ENCODE measurements at regions of chr14 and their contacts with region 1.

Region 1: DNA sequence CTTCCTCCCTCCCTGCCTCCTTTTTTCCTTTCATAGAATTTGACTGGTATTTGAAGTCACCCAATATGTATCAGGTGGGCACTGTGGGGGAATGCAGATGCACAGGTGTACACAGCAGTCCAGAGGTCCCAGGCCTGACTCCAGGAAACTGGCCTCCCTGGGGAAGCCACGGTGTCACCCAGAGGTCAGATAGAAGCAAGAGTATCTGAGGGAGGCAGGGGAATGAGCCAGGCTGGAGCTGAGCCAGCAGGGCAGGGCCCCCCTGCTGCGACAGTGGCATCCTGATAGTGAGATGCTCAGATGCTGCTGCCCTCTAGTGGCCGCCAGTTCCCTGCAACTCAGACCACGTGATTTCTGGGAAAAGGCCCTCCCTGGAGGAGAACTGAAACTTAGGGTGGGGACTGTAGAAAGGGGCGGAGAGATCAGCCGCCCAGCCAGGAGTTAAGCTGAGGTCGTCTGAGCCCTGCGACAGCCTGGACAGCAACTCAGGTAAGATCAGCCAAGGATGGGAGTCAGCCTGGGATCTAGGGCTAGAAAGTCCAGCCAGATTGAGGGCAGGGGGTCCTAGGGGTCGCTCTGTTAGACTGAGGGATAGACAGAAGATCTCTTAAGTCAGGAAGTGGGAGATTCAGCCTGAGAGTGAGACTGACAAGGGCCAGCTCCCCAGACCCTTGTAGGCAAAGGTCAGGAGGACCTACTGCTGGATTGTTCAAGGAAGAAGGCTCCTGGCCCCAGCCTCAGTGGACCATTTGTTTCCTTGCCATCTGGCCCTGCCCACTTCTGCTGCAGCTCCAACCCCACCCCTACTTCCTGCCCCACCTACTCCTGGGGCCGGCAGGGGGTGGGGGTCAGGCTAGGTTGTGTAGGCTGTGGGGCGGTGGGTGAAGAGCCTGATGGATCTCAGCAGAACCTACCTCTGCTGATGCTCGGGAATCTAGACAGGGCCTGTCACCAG is at the start of gene IRF9:
- DNase-seq: peak; percentile 95 to 97 (median 96)
- ATAC-seq: peak; percentile 88 to 95 (median 94)
- H3K4me3 ChIP-seq: peak within 1 kb of the TSS; percentile 36 to 85 (median 72)
- H3K27ac ChIP-seq: peak within 1 kb of the TSS; percentile 82 to 100 (median 97)
- H3K4me1 ChIP-seq: peaks cover 0 to 54% (median 22%) of the 10 kb centered on the region in 12 donors
- H3K27me3 ChIP-seq: no peaks in the 10 kb centered on the region
- CTCF ChIP-seq: peak; percentile 86 to 98 (median 93)
- POLR2A ChIP-seq: peak in 1 of 2 donors; percentile 59
- total RNA-seq, gene IRF9: 23.4 to 169 (median 29.8) TPM

Region 2: DNA sequence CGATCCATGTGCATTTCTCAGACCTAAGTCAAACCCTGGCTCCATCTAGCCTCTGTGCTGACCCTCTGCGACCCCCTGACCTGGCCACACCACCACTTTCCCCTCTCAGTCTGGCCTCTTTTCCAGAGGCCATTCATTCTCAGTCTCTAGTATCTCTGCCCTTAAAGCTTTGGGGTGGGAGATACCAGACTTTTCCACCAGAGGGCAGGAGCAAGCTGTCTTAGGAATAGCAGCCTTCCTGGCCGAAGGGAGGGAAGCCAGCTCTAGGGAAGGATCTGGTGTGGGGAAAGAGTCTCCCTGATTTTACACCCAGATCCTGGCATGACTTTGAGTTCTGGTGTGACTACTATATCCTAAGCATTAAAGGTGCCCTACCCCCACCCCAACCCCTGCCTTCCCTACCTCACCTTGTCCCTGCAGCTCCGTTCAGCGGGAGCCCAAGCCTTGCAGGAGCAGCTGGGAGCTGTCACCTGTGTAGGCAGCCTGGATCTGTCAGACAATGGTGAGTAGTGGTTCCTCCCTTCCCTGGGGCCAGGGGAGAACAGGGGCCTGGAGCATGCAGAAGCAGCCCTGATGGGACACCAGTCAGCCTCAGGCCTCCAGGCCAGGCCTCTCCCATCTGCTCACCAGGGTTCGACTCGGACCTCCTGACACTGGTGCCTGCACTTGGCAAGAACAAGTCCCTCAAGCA is 102.7 kb before region 1 on chr14:
- intact Hi-C with region 1: loop called in 3 of 10 experiments (anchors 2 to 10 kb)
- DNase-seq: peak in 3 of 5 donors; percentile 31 to 81 (median 65)
- ATAC-seq: peak; percentile 71 to 91 (median 78)
- H3K4me3 ChIP-seq: no peak overlapping the region
- H3K27ac ChIP-seq: no peak overlapping the region
- H3K4me1 ChIP-seq: peaks cover 0 to 2% (median 0%) of the 10 kb centered on the region in 12 donors
- H3K27me3 ChIP-seq: peaks cover 0 to 6% (median 0%) of the 10 kb centered on the region in 9 donors
- CTCF ChIP-seq: peak; percentile 29 to 94 (median 75)
- POLR2A ChIP-seq: no peak

Region 3: DNA sequence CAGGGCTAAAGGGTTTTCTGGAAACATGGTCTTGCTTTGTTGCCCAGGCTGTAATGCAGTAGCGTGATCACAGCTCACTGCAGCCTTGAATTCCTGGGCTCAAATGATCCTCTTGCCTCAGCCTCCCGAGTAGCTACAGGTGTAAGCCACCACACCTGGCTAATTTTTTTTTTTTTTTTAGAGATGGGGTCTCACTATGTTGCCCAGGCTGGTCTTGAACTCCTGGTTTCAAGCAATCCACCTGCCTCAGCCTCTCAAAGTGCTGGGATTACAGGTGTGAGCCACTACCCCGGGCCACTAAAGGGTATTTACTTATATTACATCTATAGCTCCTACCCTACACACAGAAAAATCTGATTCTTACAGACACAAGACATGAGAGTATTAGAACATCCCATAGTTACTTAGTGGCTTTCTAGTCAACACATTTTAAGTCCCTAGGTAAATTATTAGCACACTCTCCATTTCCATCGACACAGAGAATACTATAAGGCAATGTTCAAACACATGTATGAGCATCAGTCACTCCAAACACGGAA is 52.7 kb before region 1 on chr14:
- intact Hi-C with region 1: loop called in 1 of 10 experiments (anchors 5 kb)
- DNase-seq: no peak
- ATAC-seq: no peak
- H3K4me3 ChIP-seq: no peak overlapping the region
- H3K27ac ChIP-seq: peak overlapping the region in 3 of 12 donors; percentile 7 to 63 (median 44)
- H3K4me1 ChIP-seq: peaks cover 0 to 22% (median 8%) of the 10 kb centered on the region in 12 donors
- H3K27me3 ChIP-seq: no peaks in the 10 kb centered on the region
- CTCF ChIP-seq: no peak
- POLR2A ChIP-seq: no peak

Region 4: GRCh38 chr14:24146978-24147760 is 14.0 kb before region 1 on chr14 and contains the start of gene RNF31:
- intact Hi-C with region 1: loop called in 1 of 10 experiments (anchors 1 kb)
- DNase-seq: peak; percentile 98 to 99 (median 99)
- ATAC-seq: peak; percentile 93 to 97 (median 95)
- H3K4me3 ChIP-seq: peak within 1 kb of the TSS; percentile 57 to 94 (median 84)
- H3K27ac ChIP-seq: peak within 1 kb of the TSS; percentile 49 to 97 (median 94)
- H3K4me1 ChIP-seq: peaks cover 6 to 51% (median 25%) of the 10 kb centered on the region in 12 donors
- H3K27me3 ChIP-seq: no peaks in the 10 kb centered on the region
- CTCF ChIP-seq: no peak
- POLR2A ChIP-seq: peak in 1 of 2 donors; percentile 56
- total RNA-seq, gene RNF31: 31.6 to 54.2 (median 36.6) TPM